ENCODE measurements at regions of chr5 and their contacts with region 1.

Region 1: DNA sequence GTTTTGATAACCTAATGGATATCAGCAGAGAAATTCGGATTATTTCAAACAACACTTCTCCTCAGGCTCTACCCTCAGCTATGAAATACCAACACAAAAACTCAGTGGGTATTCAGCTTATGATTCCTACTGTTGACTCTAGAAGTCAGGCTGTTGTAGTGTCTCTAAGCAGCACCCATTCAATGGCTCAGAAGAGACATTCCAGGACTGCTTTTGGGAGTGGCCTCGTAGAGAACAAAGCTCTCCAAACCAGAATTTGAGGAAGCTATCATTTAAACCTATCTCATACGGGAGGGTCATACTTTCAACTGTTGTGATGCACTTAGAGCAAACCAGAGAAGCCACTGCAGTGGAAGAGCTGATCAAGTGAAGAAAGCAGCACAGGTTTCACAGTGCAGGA is 34.1 kb downstream of the ETF1 start:
- DNase-seq: no peak
- ATAC-seq: no peak
- H3K4me3 ChIP-seq: no peak overlapping the region
- H3K27ac ChIP-seq: no peak overlapping the region
- H3K4me1 ChIP-seq: no peaks in the 10 kb centered on the region
- H3K27me3 ChIP-seq: no peaks in the 10 kb centered on the region
- CTCF ChIP-seq: no peak
- EP300 ChIP-seq: no peak
- POLR2A ChIP-seq: no peak
- RAD21 ChIP-seq: no peak

Region 2: DNA sequence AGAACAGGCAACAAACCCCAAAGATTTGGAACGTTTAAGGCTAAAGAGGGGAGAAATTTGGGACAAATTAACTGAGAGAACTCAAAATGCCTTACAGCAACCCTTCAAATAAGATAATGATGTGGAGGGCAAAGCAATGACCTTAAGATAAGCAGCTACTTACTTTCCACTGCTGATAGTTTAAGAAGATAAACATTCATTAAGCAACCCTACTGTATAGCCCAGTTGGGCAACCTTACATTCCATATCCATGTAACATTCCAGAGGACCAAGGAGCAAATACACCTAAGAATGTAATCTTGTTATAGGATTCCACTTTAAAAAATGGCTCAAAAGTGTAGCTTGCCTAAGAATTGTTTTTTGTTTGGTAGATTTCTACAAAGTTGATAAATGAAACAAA is 19.2 kb after region 1 on chr5:
- CTCF ChIA-PET with region 1: no interaction called
- POLR2A ChIA-PET with region 1: interaction called, 7 read pairs
- in situ Hi-C with region 1: no loop called
- intact Hi-C with region 1: loop called (anchors 1 kb)
- DNase-seq: no peak
- ATAC-seq: no peak
- H3K4me3 ChIP-seq: no peak overlapping the region
- H3K27ac ChIP-seq: no peak overlapping the region
- H3K4me1 ChIP-seq: peaks cover 4 to 11% of the 10 kb centered on the region in 2 experiments; a peak in 3 of 5 replicates
- H3K27me3 ChIP-seq: no peaks in the 10 kb centered on the region
- CTCF ChIP-seq: no peak
- EP300 ChIP-seq: no peak
- POLR2A ChIP-seq: no peak
- RAD21 ChIP-seq: no peak